ENCODE measurements at regions of chr2 and their contacts with region 1.

Region 1: GRCh38 chr2:119476301-119477021 is 44.8 kb downstream of the TMEM37 start:
- DNase-seq: peak; percentile 67 to 87
- H3K4me3 ChIP-seq: no peak overlapping the region
- H3K27ac ChIP-seq: no peak overlapping the region
- H3K4me1 ChIP-seq: peaks cover 0 to 14% (median 8%) of the 10 kb centered on the region in 4 experiments; a peak in 5 of 7 replicates
- H3K27me3 ChIP-seq: no peaks in the 10 kb centered on the region; a peak in 1 of 7 replicates
- CTCF ChIP-seq: peak; percentile 93 to 98 (median 98)
- EP300 ChIP-seq: no peak
- POLR2A ChIP-seq: no peak
- RAD21 ChIP-seq: peak; percentile 95 to 97

Region 2: GRCh38 chr2:119407430-119408220 is 68.8 kb before region 1 on chr2:
- CTCF ChIA-PET with region 1: interaction called, 411 read pairs
- POLR2A ChIA-PET with region 1: interaction called, 3 read pairs
- DNase-seq: peak in 1 of 2 experiments; percentile 69
- H3K4me3 ChIP-seq: no peak overlapping the region
- H3K27ac ChIP-seq: no peak overlapping the region
- H3K4me1 ChIP-seq: no peaks in the 10 kb centered on the region
- H3K27me3 ChIP-seq: no peaks in the 10 kb centered on the region
- CTCF ChIP-seq: peak; percentile 53 to 89 (median 73)
- EP300 ChIP-seq: no peak
- POLR2A ChIP-seq: no peak
- RAD21 ChIP-seq: peak; percentile 95 to 96

Region 3: DNA sequence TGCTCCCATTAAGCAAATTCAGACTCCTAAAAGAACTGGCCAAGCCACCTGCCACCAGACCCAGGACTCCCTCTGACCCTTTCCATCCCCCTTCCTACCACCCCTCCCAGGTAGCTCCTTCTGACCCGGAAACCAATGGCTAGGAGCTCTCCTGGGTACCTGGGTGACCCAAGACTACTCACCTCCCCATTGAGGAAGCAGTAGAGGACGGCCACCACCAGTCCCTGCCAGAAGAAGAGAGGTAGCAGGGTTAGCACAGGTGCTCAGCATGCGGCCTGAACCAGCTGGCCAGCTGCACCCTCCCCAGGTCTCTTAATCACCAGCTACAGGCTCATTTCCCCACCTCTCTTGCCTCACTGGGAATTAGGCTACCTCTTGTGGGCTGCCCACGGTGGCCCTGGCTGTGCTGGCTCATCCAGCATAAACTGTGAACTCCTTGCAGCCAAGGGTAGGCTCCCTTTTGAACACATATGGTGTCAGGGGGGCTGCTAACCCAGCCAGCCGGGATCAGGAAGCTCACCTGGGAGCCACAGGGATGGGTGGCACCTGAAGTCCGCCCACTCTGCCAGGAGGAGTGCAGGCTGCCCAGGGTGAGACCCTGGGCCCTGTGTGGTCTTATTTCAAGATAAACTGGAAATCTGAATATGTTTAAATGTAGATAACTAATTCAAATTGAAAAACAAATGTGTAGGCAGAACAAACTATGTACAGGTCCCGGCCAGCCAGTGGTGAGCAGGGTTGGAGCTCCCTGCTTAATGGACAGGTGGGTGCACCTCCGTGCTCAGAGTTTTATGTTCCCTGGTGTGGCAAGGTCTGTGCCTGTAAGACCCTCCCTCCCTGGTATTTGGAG is 34.9 kb before region 1 on chr2:
- CTCF ChIA-PET with region 1: interaction called, 22 read pairs
- POLR2A ChIA-PET with region 1: no interaction called
- DNase-seq: no peak
- H3K4me3 ChIP-seq: no peak overlapping the region
- H3K27ac ChIP-seq: no peak overlapping the region
- H3K4me1 ChIP-seq: peaks cover 0 to 4% (median 2%) of the 10 kb centered on the region in 4 experiments; a peak in 2 of 7 replicates
- H3K27me3 ChIP-seq: no peaks in the 10 kb centered on the region
- CTCF ChIP-seq: no peak
- EP300 ChIP-seq: no peak
- POLR2A ChIP-seq: no peak
- RAD21 ChIP-seq: no peak

Region 4: DNA sequence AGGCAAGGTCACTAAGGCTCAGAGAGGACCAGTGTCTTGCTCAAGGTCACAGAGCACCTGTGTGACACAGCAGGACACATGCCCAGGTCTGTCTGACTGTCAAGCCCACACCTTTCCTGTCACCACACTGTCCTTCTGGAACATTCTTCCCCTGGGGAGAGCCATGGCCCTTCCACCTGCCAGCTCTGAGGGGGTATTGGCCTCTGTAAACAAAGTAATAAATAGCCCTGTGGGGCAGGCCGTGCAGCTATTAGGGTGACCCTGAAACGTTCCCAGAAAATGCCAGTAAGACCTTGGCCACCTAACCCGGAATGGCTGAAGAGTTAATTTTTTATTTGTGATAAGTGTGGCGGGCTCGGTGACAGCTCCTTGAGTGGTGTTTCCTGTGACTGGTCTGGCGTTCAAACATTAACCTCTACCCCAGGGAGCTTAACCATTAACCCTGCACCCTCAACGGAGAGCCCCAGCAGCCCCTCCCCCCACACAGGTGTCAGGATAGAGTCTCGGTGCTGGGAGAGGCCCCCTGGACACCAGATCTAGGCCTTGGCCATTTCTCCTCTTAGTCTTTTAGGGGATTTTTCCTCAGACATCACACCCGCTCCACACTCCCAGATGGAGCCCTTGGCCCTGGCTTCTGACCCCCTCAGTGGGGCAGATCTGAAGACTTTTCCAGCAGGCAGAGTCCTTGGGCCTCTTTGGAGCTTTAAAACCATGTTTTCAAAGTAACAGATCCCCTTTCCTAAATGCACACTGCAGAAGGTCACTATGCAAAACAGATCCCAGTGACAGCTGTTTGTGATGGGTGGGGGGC is 11.2 kb after region 1 on chr2:
- CTCF ChIA-PET with region 1: interaction called, 100 read pairs
- POLR2A ChIA-PET with region 1: interaction called, 4 read pairs
- DNase-seq: no peak
- H3K4me3 ChIP-seq: no peak overlapping the region
- H3K27ac ChIP-seq: no peak overlapping the region
- H3K4me1 ChIP-seq: peaks cover 0 to 3% (median 2%) of the 10 kb centered on the region in 4 experiments; a peak in 6 of 7 replicates
- H3K27me3 ChIP-seq: no peaks in the 10 kb centered on the region; a peak in 1 of 7 replicates
- CTCF ChIP-seq: no peak
- EP300 ChIP-seq: no peak
- POLR2A ChIP-seq: no peak
- RAD21 ChIP-seq: no peak

Region 5: DNA sequence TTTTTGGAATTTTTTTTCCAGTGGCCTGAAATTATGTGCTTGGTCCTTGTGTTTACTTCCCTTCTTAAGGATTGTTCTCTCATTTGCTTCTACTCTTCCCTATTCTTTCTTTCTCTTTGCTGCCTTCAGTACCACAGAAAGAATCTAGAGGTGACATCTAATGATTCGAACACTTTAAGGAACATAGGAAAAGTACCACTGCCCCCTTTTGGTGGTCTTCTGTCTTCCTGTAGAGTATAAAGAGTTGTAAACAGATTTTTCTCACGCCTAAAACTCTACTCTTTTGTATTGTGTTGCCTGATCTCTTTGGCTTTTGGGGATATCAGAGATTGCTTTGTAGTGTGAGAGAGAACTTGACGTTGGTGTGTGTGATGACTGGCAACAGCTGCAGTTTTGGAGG is 54.8 kb after region 1 on chr2:
- CTCF ChIA-PET with region 1: interaction called, 28 read pairs
- POLR2A ChIA-PET with region 1: no interaction called
- DNase-seq: no peak
- H3K4me3 ChIP-seq: no peak overlapping the region
- H3K27ac ChIP-seq: no peak overlapping the region
- H3K4me1 ChIP-seq: peaks cover 0 to 7% (median 5%) of the 10 kb centered on the region in 4 experiments; a peak in 3 of 7 replicates
- H3K27me3 ChIP-seq: no peaks in the 10 kb centered on the region
- CTCF ChIP-seq: peak in 2 of 3 experiments; percentile 51 to 56; a peak in 2 of 4 replicates
- EP300 ChIP-seq: no peak
- POLR2A ChIP-seq: no peak
- RAD21 ChIP-seq: peak; percentile 65 to 67